GM12878 (cell line): ENCODE measurements at regions of chr16 and their contacts with region 1.

Region 1: GRCh38 chr16:72832621-72833248 is 215.2 kb downstream of the ZFHX3 start:
- DNase-seq: no peak
- ATAC-seq: peak; percentile 96
- H3K4me3 ChIP-seq: no peak overlapping the region
- H3K27ac ChIP-seq: no peak overlapping the region
- H3K4me1 ChIP-seq: peaks cover 8% of the 10 kb centered on the region
- H3K27me3 ChIP-seq: no peaks in the 10 kb centered on the region
- CTCF ChIP-seq: peak; percentile 95 to 100 (median 99); a peak in 5 of 6 replicates
- EP300 ChIP-seq: no peak
- POLR2A ChIP-seq: no peak
- RAD21 ChIP-seq: peak; percentile 96

Region 2: DNA sequence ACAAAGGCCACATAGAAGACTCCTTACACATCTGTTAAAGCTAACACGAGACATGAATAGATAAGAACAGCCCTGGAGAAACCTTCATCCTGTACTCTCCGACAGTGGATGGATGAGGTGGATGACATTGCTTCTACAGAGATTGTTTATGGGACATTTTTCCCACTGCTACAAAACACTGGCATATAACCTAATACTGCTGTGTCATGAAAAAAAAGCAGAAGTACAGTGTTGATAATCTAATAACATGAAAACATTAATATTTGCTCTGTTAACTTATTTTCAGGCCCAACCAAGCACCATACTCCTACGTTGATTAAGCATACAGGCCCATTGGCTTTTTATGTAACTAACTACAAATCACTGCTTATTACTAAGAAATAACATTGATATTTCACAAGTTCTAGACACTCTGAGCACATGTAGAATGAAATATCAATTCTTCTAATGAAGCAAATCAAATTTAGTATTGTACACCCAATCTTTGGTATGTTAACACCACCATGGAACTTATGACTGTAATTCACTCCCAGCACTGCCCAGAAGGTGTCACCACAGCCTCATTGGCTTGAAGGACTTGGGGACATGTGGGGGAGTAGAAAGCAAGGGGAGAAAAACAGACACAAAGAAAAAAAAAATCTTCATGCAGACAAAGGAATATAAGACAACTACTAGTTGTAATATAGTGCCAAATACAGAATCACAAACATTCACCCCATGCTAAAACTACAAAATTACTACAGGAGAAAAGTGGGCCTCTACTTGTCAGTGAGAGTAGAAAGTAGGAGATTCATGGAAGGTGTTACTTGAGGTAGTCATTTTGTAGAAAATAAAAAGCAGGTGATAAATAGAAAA is 330.8 kb before region 1 on chr16:
- CTCF ChIA-PET with region 1: interaction called, 33 read pairs
- POLR2A ChIA-PET with region 1: no interaction called
- RAD21 ChIA-PET with region 1: interaction called, 24 read pairs
- SMC1A ChIA-PET with region 1: interaction called, 33 read pairs
- in situ Hi-C with region 1: no loop called
- intact Hi-C with region 1: loop called (anchors 5 kb)
- DNase-seq: peak; percentile 42
- ATAC-seq: peak; percentile 98
- H3K4me3 ChIP-seq: no peak overlapping the region
- H3K27ac ChIP-seq: no peak overlapping the region
- H3K4me1 ChIP-seq: no peaks in the 10 kb centered on the region
- H3K27me3 ChIP-seq: no peaks in the 10 kb centered on the region
- CTCF ChIP-seq: peak; percentile 82 to 93 (median 86)
- EP300 ChIP-seq: no peak
- POLR2A ChIP-seq: no peak
- RAD21 ChIP-seq: peak; percentile 99

Region 3: DNA sequence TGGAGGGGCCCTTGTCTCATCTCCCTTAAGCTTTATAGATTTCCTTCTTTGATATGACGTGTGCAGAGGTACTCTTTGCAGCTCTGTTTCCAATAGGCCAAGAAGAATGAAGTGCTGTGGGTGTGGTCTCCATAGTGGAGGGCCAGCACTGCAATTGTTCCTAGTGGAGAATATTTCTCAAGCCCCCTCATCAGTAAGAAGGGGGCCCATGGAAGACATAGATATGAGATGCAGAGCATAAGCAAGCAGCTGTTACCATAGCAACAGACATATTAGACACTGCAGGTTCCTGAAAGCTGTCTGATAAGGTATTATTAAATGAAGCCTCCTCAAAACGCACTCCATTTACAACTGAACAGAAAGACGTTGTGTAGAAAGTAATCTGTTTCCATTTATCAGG is 25.5 kb before region 1 on chr16:
- CTCF ChIA-PET with region 1: interaction called, 17 read pairs
- POLR2A ChIA-PET with region 1: interaction called, 3 read pairs
- RAD21 ChIA-PET with region 1: no interaction called
- SMC1A ChIA-PET with region 1: interaction called, 6 read pairs
- in situ Hi-C with region 1: no loop called
- intact Hi-C with region 1: no loop called
- DNase-seq: no peak
- ATAC-seq: no peak
- H3K4me3 ChIP-seq: no peak overlapping the region
- H3K27ac ChIP-seq: no peak overlapping the region
- H3K4me1 ChIP-seq: no peaks in the 10 kb centered on the region
- H3K27me3 ChIP-seq: no peaks in the 10 kb centered on the region
- CTCF ChIP-seq: no peak
- EP300 ChIP-seq: no peak
- POLR2A ChIP-seq: no peak
- RAD21 ChIP-seq: no peak

Region 4: GRCh38 chr16:72856797-72857196 is 24.1 kb after region 1 on chr16:
- CTCF ChIA-PET with region 1: interaction called, 26 read pairs
- POLR2A ChIA-PET with region 1: interaction called, 4 read pairs
- RAD21 ChIA-PET with region 1: interaction called, 7 read pairs
- SMC1A ChIA-PET with region 1: interaction called, 16 read pairs
- in situ Hi-C with region 1: no loop called
- intact Hi-C with region 1: no loop called
- DNase-seq: no peak
- ATAC-seq: peak; percentile 78
- H3K4me3 ChIP-seq: no peak overlapping the region
- H3K27ac ChIP-seq: no peak overlapping the region
- H3K4me1 ChIP-seq: peaks cover 6% of the 10 kb centered on the region; the same call in 1 of the 2 replicates
- H3K27me3 ChIP-seq: no peaks in the 10 kb centered on the region
- CTCF ChIP-seq: peak; percentile 37 to 42 (median 37); a peak in 4 of 6 replicates
- EP300 ChIP-seq: no peak
- POLR2A ChIP-seq: no peak
- RAD21 ChIP-seq: peak; percentile 38

Region 5: DNA sequence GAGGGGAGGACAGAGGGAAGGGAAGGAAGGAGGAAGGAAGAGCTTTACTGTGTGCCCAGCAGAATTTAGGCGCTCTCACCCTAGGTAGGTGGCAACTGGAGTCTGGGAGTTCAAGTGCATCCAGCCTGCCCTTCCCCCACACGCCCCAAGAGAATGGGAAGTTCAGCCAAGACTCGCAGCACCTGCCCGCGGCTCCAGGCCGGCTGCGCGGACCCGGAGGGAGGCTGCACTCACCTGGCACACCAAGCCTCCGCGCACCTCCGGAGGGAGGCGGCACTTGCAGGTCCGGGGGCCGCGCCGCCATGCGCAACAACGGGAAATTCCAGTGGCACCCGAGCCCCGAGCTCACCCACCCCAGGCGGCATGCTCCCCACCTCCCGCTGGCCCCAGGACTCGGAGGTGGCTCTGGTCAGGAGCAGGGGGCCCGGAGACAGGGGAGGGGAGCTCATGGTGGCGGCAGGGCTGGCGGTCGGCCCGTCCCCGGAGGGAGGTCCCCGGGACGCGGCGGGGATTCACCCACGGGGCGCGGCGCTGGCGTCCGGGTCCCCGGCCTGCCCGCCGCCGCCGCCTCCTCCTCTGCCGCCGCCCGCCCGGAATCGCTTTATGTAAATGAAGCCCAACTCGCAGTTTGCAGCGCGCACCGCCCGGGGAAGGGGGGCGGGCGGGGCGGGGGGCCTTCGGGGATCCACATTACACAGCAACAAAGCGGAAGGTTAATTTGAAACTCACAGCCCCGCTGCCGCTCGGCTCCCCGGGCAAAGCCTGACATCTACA is 215.0 kb after region 1 on chr16 and contains the start of gene ZFHX3:
- CTCF ChIA-PET with region 1: interaction called, 57 read pairs
- POLR2A ChIA-PET with region 1: no interaction called
- RAD21 ChIA-PET with region 1: interaction called, 14 read pairs
- SMC1A ChIA-PET with region 1: interaction called, 17 read pairs
- in situ Hi-C with region 1: no loop called
- intact Hi-C with region 1: no loop called
- DNase-seq: no peak
- ATAC-seq: peak; percentile 84
- H3K4me3 ChIP-seq: peak within 1 kb of the TSS; percentile 80
- H3K27ac ChIP-seq: peak within 1 kb of the TSS; percentile 67
- H3K4me1 ChIP-seq: peaks cover 27% of the 10 kb centered on the region
- H3K27me3 ChIP-seq: no peaks in the 10 kb centered on the region
- CTCF ChIP-seq: peak in 2 of 3 experiments; percentile 24 to 59; a peak in 3 of 6 replicates
- EP300 ChIP-seq: no peak
- POLR2A ChIP-seq: peak; percentile 72
- RAD21 ChIP-seq: peak; percentile 64
- polyA plus RNA-seq, gene ZFHX3: 0.68 to 3.5 TPM

Region 6: GRCh38 chr16:73878611-73879010 is 1045.9 kb after region 1 on chr16:
- CTCF ChIA-PET with region 1: interaction called, 12 read pairs
- POLR2A ChIA-PET with region 1: no interaction called
- RAD21 ChIA-PET with region 1: interaction called, 9 read pairs
- SMC1A ChIA-PET with region 1: interaction called, 3 read pairs
- in situ Hi-C with region 1: no loop called
- intact Hi-C with region 1: no loop called
- DNase-seq: peak; percentile 3
- ATAC-seq: peak; percentile 56
- H3K4me3 ChIP-seq: no peak overlapping the region
- H3K27ac ChIP-seq: no peak overlapping the region
- H3K4me1 ChIP-seq: no peaks in the 10 kb centered on the region
- H3K27me3 ChIP-seq: no peaks in the 10 kb centered on the region
- CTCF ChIP-seq: peak; percentile 30 to 69 (median 36); a peak in 4 of 6 replicates
- EP300 ChIP-seq: no peak
- POLR2A ChIP-seq: no peak
- RAD21 ChIP-seq: peak; percentile 81